HCT116 (cell line): ENCODE measurements at regions of chr6 and their contacts with region 1.

Region 1: DNA sequence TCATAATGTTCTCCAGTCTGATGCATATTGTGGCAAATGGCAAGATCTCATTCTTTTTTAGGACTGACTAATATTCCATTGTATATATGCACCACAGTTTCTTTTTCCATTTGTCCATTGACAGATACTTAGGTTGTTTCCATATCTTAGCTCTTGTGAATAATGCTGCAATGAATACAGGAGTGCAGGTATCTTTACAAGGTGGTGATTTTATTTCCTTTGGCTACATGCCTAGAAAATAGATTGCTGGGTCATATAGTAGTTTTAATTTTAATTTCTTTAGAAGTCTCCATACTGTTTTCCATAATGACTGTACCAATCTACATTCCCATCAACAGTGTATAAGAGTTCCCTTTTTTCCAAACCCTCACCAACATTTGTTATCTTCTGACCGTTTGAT is 97.5 kb downstream of the TRMT11 start:
- DNase-seq: no peak
- ATAC-seq: no peak
- H3K4me3 ChIP-seq: no peak overlapping the region
- H3K27ac ChIP-seq: no peak overlapping the region
- H3K4me1 ChIP-seq: no peaks in the 10 kb centered on the region
- H3K27me3 ChIP-seq: no peaks in the 10 kb centered on the region
- CTCF ChIP-seq: no peak
- POLR2A ChIP-seq: no peak
- RAD21 ChIP-seq: no peak

Region 2: DNA sequence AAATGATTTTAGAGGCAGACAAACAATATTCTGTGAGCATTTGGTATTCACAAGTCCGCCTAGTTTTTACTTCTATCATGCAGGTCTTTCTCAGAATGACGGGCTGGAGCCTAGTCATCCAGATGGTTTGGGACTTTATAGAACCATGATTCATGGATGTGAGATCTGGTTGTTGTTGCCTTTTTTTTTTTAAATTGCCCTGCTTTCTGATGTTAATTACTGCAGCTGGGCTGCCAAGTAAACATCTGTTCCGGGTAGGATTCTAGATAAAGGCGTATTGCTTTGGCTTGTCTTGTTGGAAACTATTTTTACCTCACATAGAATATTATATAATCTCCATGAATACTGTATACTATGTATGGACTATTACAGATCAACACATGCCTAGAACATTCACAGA is 1063.5 kb before region 1 on chr6:
- CTCF ChIA-PET with region 1: no interaction called
- POLR2A ChIA-PET with region 1: no interaction called
- RAD21 ChIA-PET with region 1: no interaction called
- intact Hi-C with region 1: no loop called
- DNase-seq: no peak
- ATAC-seq: no peak
- H3K4me3 ChIP-seq: no peak overlapping the region
- H3K27ac ChIP-seq: no peak overlapping the region
- H3K4me1 ChIP-seq: no peaks in the 10 kb centered on the region
- H3K27me3 ChIP-seq: no peaks in the 10 kb centered on the region
- CTCF ChIP-seq: no peak
- POLR2A ChIP-seq: no peak
- RAD21 ChIP-seq: no peak

Region 3: GRCh38 chr6:126140015-126140414 is 56.1 kb after region 1 on chr6:
- CTCF ChIA-PET with region 1: no interaction called
- POLR2A ChIA-PET with region 1: no interaction called
- RAD21 ChIA-PET with region 1: no interaction called
- intact Hi-C with region 1: loop called (anchors 2 kb)
- DNase-seq: no peak
- ATAC-seq: no peak
- H3K4me3 ChIP-seq: no peak overlapping the region
- H3K27ac ChIP-seq: no peak overlapping the region
- H3K4me1 ChIP-seq: no peaks in the 10 kb centered on the region
- H3K27me3 ChIP-seq: no peaks in the 10 kb centered on the region
- CTCF ChIP-seq: no peak
- POLR2A ChIP-seq: no peak
- RAD21 ChIP-seq: no peak